Right ventricle myocardium inferior (tissue), 1 donor: ENCODE measurements at regions of chr3 and their contacts with region 1.

Region 1: GRCh38 chr3:155313916-155314315 is 20.4 kb upstream of the STRIT1 start:
- DNase-seq: no peak
- ATAC-seq: no peak

Region 2: DNA sequence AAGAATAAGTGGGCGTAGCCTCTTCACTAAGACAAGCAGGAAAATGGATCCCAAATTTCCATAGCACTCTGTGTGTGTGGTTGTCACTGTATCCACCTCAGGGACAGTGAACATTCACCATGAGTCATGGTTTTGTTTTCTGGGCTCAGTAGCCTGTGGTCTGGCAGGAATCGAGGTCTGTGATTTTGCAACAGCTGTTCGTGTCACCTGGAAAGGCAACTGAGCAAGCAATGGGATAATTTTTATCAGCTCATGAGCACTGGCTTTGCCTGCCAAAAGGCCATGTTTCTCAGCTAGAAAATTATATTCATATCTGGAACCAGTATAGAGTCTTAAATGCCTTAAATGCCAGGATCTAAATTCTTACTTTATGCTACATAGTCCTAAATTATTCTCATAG is 81.3 kb before region 1 on chr3:
- intact Hi-C with region 1: loop called (anchors 2 kb)
- DNase-seq: peak; percentile 65
- ATAC-seq: peak; percentile 93